G401 (cell line): ENCODE measurements at regions of chr4 and their contacts with region 1.

Region 1: GRCh38 chr4:16001484-16001858 is 38.5 kb upstream of the FGFBP2 start:
- DNase-seq: peak; percentile 77

Region 2: GRCh38 chr4:15848191-15848842 is 153.2 kb before region 1 on chr4:
- in situ Hi-C with region 1: no loop called
- DNase-seq: no peak

Region 3: DNA sequence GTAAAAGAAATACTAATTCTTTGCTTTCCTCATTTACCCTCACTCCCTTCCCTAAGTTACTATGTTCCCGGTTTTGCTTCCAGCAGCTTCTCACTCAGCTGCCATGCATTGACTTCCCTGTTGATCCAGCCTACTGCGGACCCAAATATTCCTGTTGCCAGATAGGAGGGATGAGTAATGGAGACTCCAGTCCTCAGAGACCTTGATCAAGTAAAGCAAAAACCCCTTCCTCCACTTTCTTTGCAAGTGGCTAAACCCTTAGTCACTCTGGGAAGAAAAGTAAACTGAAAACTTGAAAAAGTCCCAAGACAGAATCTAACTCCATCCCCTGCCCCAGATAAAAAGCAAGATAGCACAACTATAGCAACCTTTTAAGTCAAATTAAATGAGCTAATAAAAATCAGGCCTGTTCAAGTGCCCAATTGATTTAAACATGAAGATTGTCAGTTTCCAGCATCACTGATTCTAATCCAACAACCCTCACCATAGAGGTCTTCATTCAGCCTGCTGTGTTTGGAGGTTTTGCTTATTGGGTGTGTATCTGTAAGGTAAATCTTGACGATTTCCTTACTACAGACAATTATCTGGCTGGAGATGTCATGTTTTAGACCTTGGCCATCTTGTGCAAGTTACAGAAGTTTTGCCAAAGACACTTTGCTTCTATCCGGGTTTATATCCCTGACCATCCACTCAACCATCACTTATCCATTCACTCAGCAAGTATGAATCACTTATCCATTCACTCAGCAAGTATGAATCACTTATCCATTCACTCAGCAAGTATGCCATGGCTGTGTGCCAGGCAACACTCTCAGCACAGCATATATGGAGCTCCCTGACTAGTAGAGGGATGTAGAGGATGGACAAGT is 80.5 kb before region 1 on chr4:
- in situ Hi-C with region 1: loop called (anchors 25 kb)
- DNase-seq: no peak